Activated T-helper 1 cell treated with anti-CD3 and anti-CD28 coated beads, Interleukin-12 subunit alpha, Interleukin-12 subunit beta, Interleukin-2, Interleukin-4 antibody, amounts not matched to agents 30 ng/mL and 10 ng/mL and 1 ng/mL, durations not matched to agents 14 hours and 24 hours and 36 hours (primary cell): ENCODE measurements at regions of chr16 and their contacts with region 1.

Region 1: DNA sequence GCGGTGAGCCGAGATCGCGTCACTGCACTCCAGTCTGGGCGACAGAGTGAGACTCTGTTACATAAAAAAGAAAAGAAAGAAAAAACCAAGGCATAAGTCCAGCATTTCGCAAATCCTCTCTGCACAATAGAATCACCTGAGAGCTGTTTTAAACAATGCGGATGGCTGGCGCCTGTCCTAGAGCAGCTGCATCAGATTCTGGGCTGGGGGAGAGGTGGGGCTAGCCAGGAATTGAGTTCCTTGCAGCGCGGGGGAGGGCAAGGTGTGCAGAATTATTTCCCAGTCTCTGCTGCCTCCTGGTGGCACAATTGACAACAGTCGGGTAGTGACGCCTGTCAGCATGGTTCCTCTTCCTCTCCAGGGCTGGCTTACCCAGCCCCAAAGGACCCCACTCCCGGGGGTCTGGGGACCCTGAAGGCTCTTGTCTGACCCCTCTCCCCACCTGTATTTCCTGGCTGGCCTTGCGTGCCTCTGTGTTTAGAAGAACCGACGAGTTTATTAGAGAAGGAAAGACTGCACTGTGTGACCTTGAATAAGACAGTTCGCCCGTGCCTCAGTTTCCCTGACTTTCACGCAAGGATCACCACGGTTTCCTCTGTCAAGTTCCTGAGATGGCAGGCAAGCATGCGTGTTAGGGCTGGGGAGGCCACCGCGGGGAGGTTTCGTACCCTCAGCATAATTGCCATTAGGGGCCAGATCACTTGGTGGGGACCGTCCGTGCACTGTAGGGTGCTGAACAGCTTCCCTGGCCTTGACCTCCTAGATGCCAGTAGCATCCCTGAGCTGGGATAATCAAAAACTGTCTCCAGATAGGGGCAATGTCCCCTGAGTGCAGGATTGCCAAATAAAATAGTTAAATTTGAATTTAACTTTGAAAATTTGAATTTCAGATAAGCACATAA is 41.0 kb upstream of the PLCG2 start:
- DNase-seq: peak; percentile 78
- H3K4me3 Mint-ChIP-seq: peak overlapping the region; percentile 40
- H3K27ac Mint-ChIP-seq: no peak overlapping the region
- H3K4me1 Mint-ChIP-seq: peaks cover 16% of the 10 kb centered on the region
- H3K27me3 Mint-ChIP-seq: peaks cover 7% of the 10 kb centered on the region

Region 2: DNA sequence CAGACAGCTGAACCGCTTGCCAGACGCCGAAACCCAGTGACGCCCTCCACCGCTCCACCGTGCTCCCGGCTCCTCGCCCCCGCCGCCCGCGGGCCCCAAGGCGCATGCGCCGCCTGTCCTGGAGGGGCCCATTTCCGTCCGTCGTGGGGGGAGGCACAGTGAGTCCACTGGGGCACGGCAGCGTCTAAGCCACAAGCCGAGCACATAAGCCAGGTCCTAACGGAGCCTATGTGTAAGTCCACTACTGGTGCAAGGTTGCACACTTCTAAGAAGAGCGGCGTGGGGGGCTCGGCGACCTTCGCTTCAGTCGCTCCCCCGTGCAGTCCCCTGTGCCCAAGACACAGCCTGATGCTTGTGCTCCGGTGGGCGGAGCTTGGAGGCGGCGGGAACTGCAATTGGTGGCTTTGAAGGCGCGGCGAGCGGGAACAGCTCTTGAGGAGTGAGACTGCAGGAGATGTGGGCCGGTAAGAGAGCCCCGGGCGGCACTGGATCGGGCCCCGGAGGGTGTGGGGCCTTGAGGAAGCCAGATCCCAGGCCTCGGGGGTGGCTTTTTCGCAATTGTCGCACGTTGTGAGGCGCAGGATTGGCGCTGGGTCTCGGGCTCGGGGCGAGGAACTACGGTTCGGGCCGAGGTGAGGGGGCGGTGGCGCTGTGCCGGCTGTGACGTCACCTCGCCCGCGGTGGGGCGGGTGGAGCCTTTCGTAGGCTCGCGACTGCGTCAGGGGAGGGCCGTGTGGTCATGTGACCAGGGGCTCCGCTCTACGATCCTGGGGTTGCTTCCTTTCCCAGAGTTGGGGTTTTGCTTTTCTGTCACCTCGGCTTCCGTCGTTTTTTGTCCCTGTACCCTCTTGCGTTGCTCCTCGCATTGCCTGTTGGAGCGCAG is 731.1 kb before region 1 on chr16 and contains the starts of genes CENPN and CMC2:
- intact Hi-C with region 1: loop called (anchors 10 kb)
- DNase-seq: peak; percentile 97
- H3K4me3 Mint-ChIP-seq: peak within 1 kb of the TSS; percentile 100
- H3K27ac Mint-ChIP-seq: peak within 1 kb of the TSS; percentile 100
- H3K4me1 Mint-ChIP-seq: peaks cover 61% of the 10 kb centered on the region
- H3K27me3 Mint-ChIP-seq: peaks cover 2% of the 10 kb centered on the region
- total RNA-seq, gene CENPN: 65.6 and 67.8 TPM in 2 replicates
- total RNA-seq, gene CMC2: 141 and 156 TPM in 2 replicates

Region 3: DNA sequence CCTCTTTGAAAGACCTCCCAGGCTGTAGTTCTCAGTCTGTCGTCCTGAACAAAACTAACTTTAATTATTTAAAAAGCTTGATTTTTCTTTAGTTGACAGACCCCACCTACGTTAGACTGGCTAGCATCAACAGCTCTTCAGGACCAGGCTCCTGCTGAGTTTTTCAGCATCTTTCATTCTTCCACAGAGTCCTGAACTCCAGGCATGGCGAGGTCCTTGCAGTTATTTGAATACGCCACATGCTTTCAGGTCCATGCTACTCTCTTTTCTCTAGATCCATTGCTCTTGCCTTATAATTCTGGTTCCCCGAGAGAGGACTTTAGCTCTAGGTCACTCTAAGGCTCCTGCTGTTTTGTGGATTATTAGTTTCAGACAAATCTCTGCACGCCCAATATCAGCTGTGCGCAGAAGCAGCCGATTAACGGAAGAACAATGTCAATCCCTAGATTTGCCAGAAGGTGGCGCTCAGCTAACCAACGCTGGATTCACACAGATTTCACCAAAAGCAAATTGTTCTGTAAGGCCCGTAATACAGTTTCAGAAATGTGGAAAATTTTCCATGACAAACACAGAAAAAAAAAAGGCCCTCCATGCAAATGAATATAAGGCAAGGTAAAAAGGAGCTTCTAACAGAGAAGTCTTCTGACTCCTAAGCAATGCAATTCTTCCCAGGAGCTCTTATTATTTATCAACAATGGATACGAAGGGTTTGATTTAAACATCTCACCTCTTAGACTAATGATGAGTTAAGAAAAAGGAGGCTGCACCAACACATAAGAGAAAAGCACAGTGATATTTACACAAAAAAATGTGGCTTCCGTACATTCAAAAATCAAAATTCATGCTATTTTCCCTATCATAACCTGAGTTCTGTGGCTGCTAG is 533.1 kb before region 1 on chr16:
- intact Hi-C with region 1: loop called (anchors 1 kb)
- DNase-seq: peak; percentile 10
- H3K4me3 Mint-ChIP-seq: no peak overlapping the region
- H3K27ac Mint-ChIP-seq: no peak overlapping the region
- H3K4me1 Mint-ChIP-seq: no peaks in the 10 kb centered on the region
- H3K27me3 Mint-ChIP-seq: peaks cover 11% of the 10 kb centered on the region

Region 4: GRCh38 chr16:81366316-81366932 is 371.7 kb before region 1 on chr16:
- intact Hi-C with region 1: loop called (anchors 1 kb)
- DNase-seq: no peak
- H3K4me3 Mint-ChIP-seq: no peak overlapping the region
- H3K27ac Mint-ChIP-seq: no peak overlapping the region
- H3K4me1 Mint-ChIP-seq: no peaks in the 10 kb centered on the region
- H3K27me3 Mint-ChIP-seq: no peaks in the 10 kb centered on the region

Region 5: DNA sequence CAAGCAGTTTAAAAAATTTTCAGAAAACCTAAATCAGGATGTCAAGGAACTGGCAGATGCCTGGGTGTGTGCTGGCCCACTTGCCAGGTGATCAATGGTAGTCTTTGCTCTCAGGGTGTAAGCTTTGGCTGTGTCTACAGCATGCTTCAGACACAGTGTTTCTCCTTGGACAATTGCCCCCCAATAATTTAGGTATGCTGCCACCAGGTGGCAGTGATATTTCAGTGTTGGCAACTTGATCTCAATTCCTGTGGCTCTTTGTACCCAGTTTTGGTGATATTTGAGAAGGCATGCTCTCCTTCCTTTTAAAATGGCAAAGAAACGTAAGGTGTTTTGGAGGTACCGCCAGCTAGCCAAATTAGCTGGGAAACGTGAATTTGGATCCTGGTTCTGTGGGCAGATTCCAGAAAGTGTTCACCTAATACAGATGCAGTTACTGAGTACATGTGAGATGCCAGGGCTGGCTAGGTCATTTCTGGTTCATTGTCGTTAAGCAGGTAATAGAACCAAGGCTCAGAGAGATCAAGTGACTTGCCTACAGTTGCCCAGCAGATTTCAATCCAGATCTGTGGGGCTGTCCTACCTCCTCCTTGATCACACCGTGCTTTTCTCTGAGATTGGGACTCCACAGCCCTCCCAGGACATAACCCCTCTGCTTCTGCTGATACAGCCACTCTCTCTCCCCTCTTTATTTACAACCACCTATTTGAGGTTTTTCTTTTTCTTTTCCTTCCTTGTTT is 114.6 kb before region 1 on chr16:
- intact Hi-C with region 1: loop called (anchors 1 kb)
- DNase-seq: peak; percentile 42
- H3K4me3 Mint-ChIP-seq: no peak overlapping the region
- H3K27ac Mint-ChIP-seq: peak overlapping the region; percentile 70
- H3K4me1 Mint-ChIP-seq: peaks cover 25% of the 10 kb centered on the region
- H3K27me3 Mint-ChIP-seq: no peaks in the 10 kb centered on the region

Region 6: GRCh38 chr16:81645266-81645694 is 92.9 kb before region 1 on chr16:
- intact Hi-C with region 1: no loop called
- DNase-seq: no peak
- H3K4me3 Mint-ChIP-seq: no peak overlapping the region
- H3K27ac Mint-ChIP-seq: no peak overlapping the region
- H3K4me1 Mint-ChIP-seq: peaks cover 20% of the 10 kb centered on the region
- H3K27me3 Mint-ChIP-seq: no peaks in the 10 kb centered on the region

Region 7: GRCh38 chr16:81696961-81697615 is 41.0 kb before region 1 on chr16:
- intact Hi-C with region 1: no loop called
- DNase-seq: peak; percentile 37
- H3K4me3 Mint-ChIP-seq: no peak overlapping the region
- H3K27ac Mint-ChIP-seq: peak overlapping the region; percentile 23
- H3K4me1 Mint-ChIP-seq: peaks cover 13% of the 10 kb centered on the region
- H3K27me3 Mint-ChIP-seq: no peaks in the 10 kb centered on the region

Region 8: GRCh38 chr16:81873843-81874752 is 136.0 kb after region 1 on chr16:
- intact Hi-C with region 1: loop called (anchors 2 kb)
- DNase-seq: peak; percentile 38
- H3K4me3 Mint-ChIP-seq: no peak overlapping the region
- H3K27ac Mint-ChIP-seq: no peak overlapping the region
- H3K4me1 Mint-ChIP-seq: peaks cover 8% of the 10 kb centered on the region
- H3K27me3 Mint-ChIP-seq: peaks cover 12% of the 10 kb centered on the region